B cell (primary cell): ENCODE measurements at regions of chr10 and their contacts with region 1.

Region 1: GRCh38 chr10:91797874-91798648 is at the start of gene TNKS2:
- DNase-seq: peak; percentile 96
- ATAC-seq: peak; percentile 75
- H3K4me3 ChIP-seq: peak within 1 kb of the TSS; percentile 77 to 91 (median 83)
- H3K4me3 Mint-ChIP-seq: peak within 1 kb of the TSS; percentile 97
- H3K27ac ChIP-seq: peak within 1 kb of the TSS; percentile 91 to 97
- H3K27ac Mint-ChIP-seq: peak within 1 kb of the TSS; percentile 99
- H3K4me1 ChIP-seq: peaks cover 34 to 36% of the 10 kb centered on the region in 2 donors
- H3K4me1 Mint-ChIP-seq: peaks cover 62% of the 10 kb centered on the region
- H3K27me3 ChIP-seq: no peaks in the 10 kb centered on the region
- H3K27me3 Mint-ChIP-seq: no peaks in the 10 kb centered on the region
- CTCF ChIP-seq: no peak
- total RNA-seq, gene TNKS2: 45.8 and 48.1 TPM in 2 replicates

Region 2: DNA sequence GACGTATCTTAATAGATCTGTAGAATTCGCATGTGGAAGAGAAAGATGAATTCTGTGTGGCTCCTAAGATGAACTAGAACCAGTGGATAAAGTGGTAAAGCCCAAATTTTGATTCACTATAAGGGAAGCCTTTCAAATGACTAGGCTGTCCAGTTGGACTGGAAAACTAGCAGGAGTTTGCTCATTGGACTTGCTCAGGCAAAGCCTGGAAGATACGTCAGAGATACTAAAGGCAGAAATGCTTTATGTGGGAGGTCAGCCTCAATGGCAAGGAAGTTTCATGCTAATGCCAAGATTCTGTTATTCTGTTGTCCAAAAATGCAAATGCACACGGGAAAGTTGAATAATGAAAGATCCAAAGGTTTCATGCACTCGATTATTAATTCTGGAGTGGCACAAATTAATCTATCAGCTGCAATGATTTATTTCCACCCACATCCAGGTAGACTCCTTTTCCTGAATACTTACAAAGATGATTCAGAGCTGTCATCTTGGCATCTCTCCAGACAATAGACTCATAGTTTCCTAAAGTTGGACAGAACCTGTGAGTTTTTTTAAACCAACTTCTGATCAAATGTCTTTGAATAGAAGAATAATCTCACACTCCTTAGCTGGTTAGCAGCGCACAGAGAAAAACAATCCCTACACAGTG is 144.7 kb before region 1 on chr10:
- CTCF ChIA-PET with region 1: no interaction called
- POLR2A ChIA-PET with region 1: no interaction called
- intact Hi-C with region 1: no loop called
- DNase-seq: no peak
- ATAC-seq: no peak
- H3K4me3 ChIP-seq: no peak overlapping the region
- H3K4me3 Mint-ChIP-seq: no peak overlapping the region
- H3K27ac ChIP-seq: no peak overlapping the region
- H3K27ac Mint-ChIP-seq: no peak overlapping the region
- H3K4me1 ChIP-seq: no peaks in the 10 kb centered on the region
- H3K4me1 Mint-ChIP-seq: no peaks in the 10 kb centered on the region
- H3K27me3 ChIP-seq: no peaks in the 10 kb centered on the region
- H3K27me3 Mint-ChIP-seq: peaks cover 2% of the 10 kb centered on the region
- CTCF ChIP-seq: no peak

Region 3: DNA sequence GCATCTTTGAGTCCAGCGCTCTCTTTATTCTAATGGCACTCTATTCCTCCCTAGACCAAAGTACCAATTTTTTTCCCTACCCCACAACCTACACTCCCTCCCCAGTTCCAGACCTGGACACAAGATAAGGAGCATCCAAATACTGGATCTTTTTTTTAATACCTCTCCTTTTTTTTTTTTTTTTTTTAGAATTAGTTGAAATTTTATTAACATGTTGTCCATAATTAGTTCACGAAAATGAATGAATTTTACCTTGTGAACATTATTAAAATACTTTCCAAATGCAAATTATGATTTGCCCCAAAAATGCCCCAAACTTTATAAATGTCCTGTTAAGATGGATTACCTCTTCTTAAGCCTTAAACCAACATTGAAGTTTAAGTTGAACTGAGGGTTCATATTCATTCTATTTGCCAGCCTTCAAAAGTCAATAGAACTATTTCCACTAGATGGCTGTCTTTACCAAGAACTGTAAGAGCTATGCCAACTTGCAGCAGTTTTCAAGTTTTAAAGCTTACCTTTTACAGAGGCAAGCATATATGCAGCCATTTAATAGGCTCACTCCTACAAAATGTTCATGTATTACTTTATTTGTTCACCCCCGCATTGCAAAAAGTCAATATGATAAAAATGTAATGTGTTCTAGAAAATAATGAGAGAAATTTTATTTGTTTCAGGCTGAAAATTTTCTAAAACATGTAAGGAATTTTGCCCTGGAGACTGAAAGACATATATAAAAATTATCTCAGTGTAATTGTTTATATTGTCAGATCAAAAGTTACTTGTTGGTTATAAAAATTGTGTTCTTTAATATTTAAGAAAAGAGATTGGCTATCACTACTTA is 39.5 kb before region 1 on chr10:
- CTCF ChIA-PET with region 1: interaction called, 32 read pairs
- POLR2A ChIA-PET with region 1: no interaction called
- intact Hi-C with region 1: loop called (anchors 2 kb)
- DNase-seq: peak; percentile 67
- ATAC-seq: peak; percentile 47
- H3K4me3 ChIP-seq: no peak overlapping the region
- H3K4me3 Mint-ChIP-seq: no peak overlapping the region
- H3K27ac ChIP-seq: no peak overlapping the region
- H3K27ac Mint-ChIP-seq: no peak overlapping the region
- H3K4me1 ChIP-seq: no peaks in the 10 kb centered on the region
- H3K4me1 Mint-ChIP-seq: no peaks in the 10 kb centered on the region
- H3K27me3 ChIP-seq: peaks cover 0 to 6% (median 2%) of the 10 kb centered on the region in 4 experiments
- H3K27me3 Mint-ChIP-seq: peaks cover 39% of the 10 kb centered on the region
- CTCF ChIP-seq: peak; percentile 79

Region 4: DNA sequence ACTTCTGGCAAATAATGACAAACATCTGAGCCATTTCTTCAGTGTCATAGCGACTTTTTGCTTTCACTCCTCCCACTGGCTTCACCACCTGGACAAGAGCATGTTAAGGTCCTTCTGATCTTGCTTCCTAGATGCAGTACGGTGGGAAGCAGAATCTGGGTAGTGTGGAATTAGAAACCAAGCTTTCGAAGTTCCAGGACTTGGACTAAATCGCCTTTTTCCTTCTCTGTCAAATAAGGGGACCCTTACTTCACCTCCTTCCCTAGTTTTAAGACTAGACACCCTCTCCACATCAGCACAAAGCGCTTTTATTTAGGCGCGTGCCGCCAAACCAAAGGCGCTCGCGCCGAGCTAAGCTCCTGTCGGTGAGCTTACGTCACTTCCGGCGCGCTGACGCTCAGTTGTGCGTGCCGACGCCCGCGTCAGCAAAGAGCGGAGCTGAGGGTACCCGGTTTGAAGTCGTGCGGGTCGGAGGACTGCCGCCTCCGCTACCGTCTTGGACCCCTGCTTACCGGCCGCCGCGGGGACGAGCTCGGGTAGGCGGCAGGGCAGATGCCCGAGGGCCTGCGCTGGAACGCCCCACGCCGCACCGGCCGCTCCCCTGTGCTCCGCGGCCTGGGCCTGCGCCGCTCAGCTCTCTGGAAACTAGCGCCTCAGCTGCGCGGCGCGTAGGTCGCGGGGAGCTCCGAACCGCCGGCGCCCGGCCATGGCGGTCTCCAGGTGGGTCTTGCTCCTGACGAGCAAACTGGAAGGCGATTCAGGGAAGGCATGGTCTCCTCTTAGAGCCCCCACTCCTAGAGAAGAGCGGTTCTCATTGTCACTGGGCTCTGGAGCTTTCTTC is 125.5 kb after region 1 on chr10 and contains the start of gene BTAF1:
- CTCF ChIA-PET with region 1: no interaction called
- POLR2A ChIA-PET with region 1: no interaction called
- intact Hi-C with region 1: loop called (anchors 1 kb)
- DNase-seq: peak; percentile 96
- ATAC-seq: peak; percentile 93
- H3K4me3 ChIP-seq: peak within 1 kb of the TSS; percentile 88 to 98 (median 93)
- H3K4me3 Mint-ChIP-seq: peak within 1 kb of the TSS; percentile 86
- H3K27ac ChIP-seq: peak within 1 kb of the TSS; percentile 93 to 99
- H3K27ac Mint-ChIP-seq: peak within 1 kb of the TSS; percentile 100
- H3K4me1 ChIP-seq: peaks cover 18 to 20% of the 10 kb centered on the region in 2 donors
- H3K4me1 Mint-ChIP-seq: peaks cover 39% of the 10 kb centered on the region
- H3K27me3 ChIP-seq: peaks cover 0 to 4% (median 2%) of the 10 kb centered on the region in 4 experiments
- H3K27me3 Mint-ChIP-seq: peaks cover 3% of the 10 kb centered on the region
- CTCF ChIP-seq: no peak
- total RNA-seq, gene BTAF1: 78.1 and 81.7 TPM in 2 replicates

Region 5: GRCh38 chr10:92290837-92291615 is 493.0 kb after region 1 on chr10 and contains the starts of genes CPEB3 and MARCHF5:
- CTCF ChIA-PET with region 1: no interaction called
- POLR2A ChIA-PET with region 1: no interaction called
- intact Hi-C with region 1: loop called (anchors 1 kb)
- DNase-seq: peak; percentile 96
- ATAC-seq: peak; percentile 97
- H3K4me3 ChIP-seq: peak within 1 kb of the TSS; percentile 57 to 99 (median 85)
- H3K4me3 Mint-ChIP-seq: peak within 1 kb of the TSS; percentile 95
- H3K27ac ChIP-seq: peak within 1 kb of the TSS; percentile 62 to 88
- H3K27ac Mint-ChIP-seq: peak within 1 kb of the TSS; percentile 91
- H3K4me1 ChIP-seq: peaks cover 9 to 20% of the 10 kb centered on the region in 2 donors
- H3K4me1 Mint-ChIP-seq: peaks cover 29% of the 10 kb centered on the region
- H3K27me3 ChIP-seq: no peaks in the 10 kb centered on the region
- H3K27me3 Mint-ChIP-seq: no peaks in the 10 kb centered on the region
- CTCF ChIP-seq: peak; percentile 68
- total RNA-seq, gene CPEB3: 5.0 and 6.7 TPM in 2 replicates
- total RNA-seq, gene MARCHF5: 25.9 and 27.8 TPM in 2 replicates